Activated B cell treated with CpG ODN at 0.5 μM for 24 hours (primary cell): ENCODE measurements at regions of chr17 and their contacts with region 1.

Region 1: GRCh38 chr17:69567130-69567529 is 152.6 kb downstream of the MAP2K6 start:
- DNase-seq: no peak
- ATAC-seq: no peak
- H3K4me3 Mint-ChIP-seq: no peak overlapping the region
- H3K27ac Mint-ChIP-seq: no peak overlapping the region
- H3K4me1 Mint-ChIP-seq: peaks cover 5% of the 10 kb centered on the region
- H3K27me3 Mint-ChIP-seq: peaks cover 6% of the 10 kb centered on the region
- CTCF ChIP-seq: no peak

Region 2: DNA sequence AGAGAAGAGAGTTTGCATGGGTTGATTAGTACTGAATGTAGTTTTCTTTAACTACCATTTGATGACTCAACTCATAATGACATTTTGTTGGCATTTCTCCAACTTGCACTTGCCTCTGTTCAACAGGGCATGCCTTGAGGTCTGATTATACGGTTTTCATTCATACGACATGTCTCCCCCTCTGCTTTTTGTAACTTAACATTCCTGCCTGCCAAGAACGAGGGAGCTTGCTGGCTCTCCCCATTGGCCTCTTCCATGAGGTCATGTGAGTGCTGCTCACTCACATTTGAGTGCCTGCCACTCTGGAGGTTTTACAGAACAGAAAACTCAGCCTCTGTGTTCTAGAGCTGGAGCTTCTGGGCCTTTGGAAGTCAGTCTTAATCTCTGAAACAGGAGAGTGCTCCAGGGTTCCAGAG is 133.0 kb before region 1 on chr17:
- CTCF ChIA-PET with region 1: no interaction called
- POLR2A ChIA-PET with region 1: no interaction called
- intact Hi-C with region 1: no loop called
- DNase-seq: no peak
- ATAC-seq: no peak
- H3K4me3 Mint-ChIP-seq: no peak overlapping the region
- H3K27ac Mint-ChIP-seq: no peak overlapping the region
- H3K4me1 Mint-ChIP-seq: peaks cover 7% of the 10 kb centered on the region
- H3K27me3 Mint-ChIP-seq: no peaks in the 10 kb centered on the region
- CTCF ChIP-seq: no peak

Region 3: DNA sequence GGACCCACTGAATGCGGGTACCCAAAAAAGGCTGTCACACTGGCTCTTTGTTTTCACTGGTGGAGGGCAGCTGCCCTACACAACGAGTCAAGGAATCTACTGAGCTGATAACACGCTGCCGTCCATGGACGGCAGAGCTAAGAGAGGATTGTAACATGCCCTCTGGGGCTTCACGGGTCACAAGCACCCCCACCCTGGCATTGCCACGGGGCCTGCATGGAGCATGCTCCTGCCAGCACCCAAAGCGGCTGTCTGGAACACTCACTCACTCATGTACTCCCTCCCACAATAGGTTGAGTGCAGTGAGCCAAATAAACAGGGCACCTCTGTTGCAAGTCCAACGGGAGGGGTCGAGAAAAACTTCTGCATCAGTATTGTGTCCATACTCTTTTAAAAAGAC is 29.0 kb after region 1 on chr17:
- CTCF ChIA-PET with region 1: no interaction called
- POLR2A ChIA-PET with region 1: no interaction called
- intact Hi-C with region 1: no loop called
- DNase-seq: no peak
- ATAC-seq: no peak
- H3K4me3 Mint-ChIP-seq: no peak overlapping the region
- H3K27ac Mint-ChIP-seq: no peak overlapping the region
- H3K4me1 Mint-ChIP-seq: no peaks in the 10 kb centered on the region
- H3K27me3 Mint-ChIP-seq: peaks cover 5% of the 10 kb centered on the region
- CTCF ChIP-seq: no peak

Region 4: GRCh38 chr17:70552230-70552981 is 985.3 kb after region 1 on chr17:
- CTCF ChIA-PET with region 1: interaction called, 11 read pairs
- POLR2A ChIA-PET with region 1: no interaction called
- intact Hi-C with region 1: no loop called
- DNase-seq: no peak
- ATAC-seq: no peak
- H3K4me3 Mint-ChIP-seq: no peak overlapping the region
- H3K27ac Mint-ChIP-seq: no peak overlapping the region
- H3K4me1 Mint-ChIP-seq: no peaks in the 10 kb centered on the region
- H3K27me3 Mint-ChIP-seq: no peaks in the 10 kb centered on the region
- CTCF ChIP-seq: no peak

Region 5: DNA sequence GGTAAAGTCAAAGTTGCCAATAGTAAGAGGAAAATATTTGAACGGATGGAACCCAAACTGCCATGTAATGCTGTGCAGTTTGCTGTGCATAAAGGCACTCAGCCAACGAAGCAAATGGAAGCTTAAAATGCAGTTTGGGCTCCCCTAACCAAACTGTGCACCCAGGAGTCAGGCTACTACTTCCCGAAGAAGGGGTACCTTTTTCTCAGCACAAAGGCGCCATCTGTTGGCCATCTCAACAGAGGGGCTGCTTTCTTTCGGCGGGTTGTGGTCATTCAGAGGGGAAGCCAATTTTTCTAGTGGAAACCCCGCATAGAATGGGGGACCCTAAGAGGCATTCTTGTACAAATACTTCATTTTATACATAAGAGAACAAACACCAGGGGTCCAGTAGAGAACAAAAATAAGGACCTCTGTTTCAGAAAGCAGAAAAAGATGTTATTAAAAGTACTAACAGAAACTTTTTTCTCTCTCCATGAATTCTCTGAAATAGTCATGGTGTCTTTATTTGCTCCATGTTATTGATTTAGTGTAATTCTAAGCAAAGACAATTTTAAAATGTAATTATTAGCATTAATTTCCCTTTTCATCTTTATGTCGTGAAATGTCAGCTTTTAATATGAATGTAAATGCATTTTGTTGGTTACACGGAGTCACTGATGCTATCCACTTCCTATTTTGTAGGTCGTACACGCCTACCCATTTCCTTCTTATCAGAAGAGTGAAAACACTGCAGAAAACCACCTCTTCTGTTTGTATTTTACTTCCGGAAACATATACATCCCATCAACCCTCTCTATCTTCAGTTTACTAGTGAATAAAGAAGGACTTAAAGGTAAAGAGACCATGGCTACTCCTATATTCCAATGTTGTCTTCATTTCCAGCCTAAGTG is 1055.5 kb after region 1 on chr17:
- CTCF ChIA-PET with region 1: no interaction called
- POLR2A ChIA-PET with region 1: no interaction called
- intact Hi-C with region 1: loop called (anchors 10 kb)
- DNase-seq: no peak
- ATAC-seq: no peak
- H3K4me3 Mint-ChIP-seq: no peak overlapping the region
- H3K27ac Mint-ChIP-seq: no peak overlapping the region
- H3K4me1 Mint-ChIP-seq: no peaks in the 10 kb centered on the region
- H3K27me3 Mint-ChIP-seq: no peaks in the 10 kb centered on the region
- CTCF ChIP-seq: no peak